CD4-positive, alpha-beta T cell (primary cell): ENCODE measurements at regions of chr7 and their contacts with region 1.

Region 1: DNA sequence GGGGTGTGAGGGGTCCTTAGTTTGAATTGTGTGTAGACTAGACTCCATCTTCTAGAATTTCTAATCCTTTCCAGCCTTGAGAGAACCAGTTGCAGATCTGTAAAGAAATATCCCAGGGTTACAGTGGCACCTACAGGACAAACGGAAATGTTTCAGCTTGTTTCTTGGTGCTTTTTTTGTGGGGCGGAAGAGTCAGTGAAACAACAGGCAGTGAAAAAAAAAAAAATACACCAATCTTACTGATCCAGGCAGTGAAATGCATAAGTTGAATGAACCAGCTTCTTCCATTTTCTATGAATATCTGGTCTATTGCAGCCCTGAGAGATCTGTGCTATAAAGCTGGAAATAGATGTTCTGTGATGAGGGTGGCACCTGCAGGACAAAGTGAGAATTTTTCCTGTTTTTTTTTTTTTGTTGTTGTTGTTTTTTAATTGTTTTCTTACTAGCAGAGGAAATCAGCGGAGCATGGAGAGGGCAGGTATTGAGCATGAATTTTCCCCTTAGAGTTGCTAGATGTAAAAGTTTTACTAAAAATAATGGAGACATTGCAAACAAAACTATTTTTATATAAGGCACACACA is 81.9 kb upstream of the DYNC1I1 start:
- DNase-seq: peak in 3 of 14 experiments; percentile 12 to 17 (median 13)
- ATAC-seq: no peak
- H3K4me3 ChIP-seq: no peak overlapping the region
- H3K4me3 Mint-ChIP-seq: no peak overlapping the region
- H3K27ac ChIP-seq: no peak overlapping the region
- H3K27ac Mint-ChIP-seq: no peak overlapping the region
- H3K4me1 ChIP-seq: no peaks in the 10 kb centered on the region
- H3K4me1 Mint-ChIP-seq: no peaks in the 10 kb centered on the region
- H3K27me3 ChIP-seq: no peaks in the 10 kb centered on the region
- H3K27me3 Mint-ChIP-seq: peaks cover 5% of the 10 kb centered on the region
- CTCF ChIP-seq: peak; percentile 20

Region 2: DNA sequence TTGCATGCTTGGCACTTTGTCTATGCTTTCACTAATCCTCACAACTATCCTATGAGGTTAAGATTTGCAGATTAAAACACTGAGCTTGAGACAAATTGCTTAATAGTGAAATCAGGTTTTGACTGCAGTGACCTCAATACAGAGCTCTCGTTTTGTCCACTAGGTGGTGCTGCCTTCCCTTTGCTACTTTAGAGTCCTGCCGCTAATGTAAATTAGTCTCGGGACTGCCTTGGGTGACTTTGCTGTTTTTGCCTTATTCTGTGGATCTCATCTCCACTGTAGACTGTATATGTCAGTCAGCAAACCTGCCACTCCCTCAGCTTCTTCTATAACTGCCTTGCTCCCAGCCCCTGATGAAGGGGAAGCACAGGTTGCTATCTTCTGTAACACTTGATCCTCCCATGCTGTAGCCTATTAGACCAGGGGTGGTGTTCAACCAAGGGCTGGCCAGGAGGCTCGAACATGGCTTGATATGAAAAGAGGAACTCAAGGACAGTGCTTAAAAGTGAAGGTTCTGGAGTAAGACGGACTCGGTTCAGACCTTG is 178.7 kb before region 1 on chr7:
- CTCF ChIA-PET with region 1: no interaction called
- POLR2A ChIA-PET with region 1: no interaction called
- intact Hi-C with region 1: loop called (anchors 5 kb)
- DNase-seq: peak in 10 of 14 experiments; percentile 1 to 67 (median 22)
- ATAC-seq: peak; percentile 46
- H3K4me3 ChIP-seq: no peak overlapping the region
- H3K4me3 Mint-ChIP-seq: no peak overlapping the region
- H3K27ac ChIP-seq: no peak overlapping the region
- H3K27ac Mint-ChIP-seq: no peak overlapping the region
- H3K4me1 ChIP-seq: peaks cover 4% of the 10 kb centered on the region
- H3K4me1 Mint-ChIP-seq: no peaks in the 10 kb centered on the region
- H3K27me3 ChIP-seq: no peaks in the 10 kb centered on the region
- H3K27me3 Mint-ChIP-seq: no peaks in the 10 kb centered on the region
- CTCF ChIP-seq: peak; percentile 69